Activated T-helper 2 cell treated with anti-CD3 and anti-CD28 coated beads, Interferon-gamma antibody, Interleukin-2, Interleukin-4, amounts not matched to agents 10 μg/mL and 5 μg/mL and 100 μg/mL, durations not matched to agents 14 hours and 24 hours and 36 hours (primary cell): ENCODE measurements at regions of chr19 and their contacts with region 1.

Region 1: DNA sequence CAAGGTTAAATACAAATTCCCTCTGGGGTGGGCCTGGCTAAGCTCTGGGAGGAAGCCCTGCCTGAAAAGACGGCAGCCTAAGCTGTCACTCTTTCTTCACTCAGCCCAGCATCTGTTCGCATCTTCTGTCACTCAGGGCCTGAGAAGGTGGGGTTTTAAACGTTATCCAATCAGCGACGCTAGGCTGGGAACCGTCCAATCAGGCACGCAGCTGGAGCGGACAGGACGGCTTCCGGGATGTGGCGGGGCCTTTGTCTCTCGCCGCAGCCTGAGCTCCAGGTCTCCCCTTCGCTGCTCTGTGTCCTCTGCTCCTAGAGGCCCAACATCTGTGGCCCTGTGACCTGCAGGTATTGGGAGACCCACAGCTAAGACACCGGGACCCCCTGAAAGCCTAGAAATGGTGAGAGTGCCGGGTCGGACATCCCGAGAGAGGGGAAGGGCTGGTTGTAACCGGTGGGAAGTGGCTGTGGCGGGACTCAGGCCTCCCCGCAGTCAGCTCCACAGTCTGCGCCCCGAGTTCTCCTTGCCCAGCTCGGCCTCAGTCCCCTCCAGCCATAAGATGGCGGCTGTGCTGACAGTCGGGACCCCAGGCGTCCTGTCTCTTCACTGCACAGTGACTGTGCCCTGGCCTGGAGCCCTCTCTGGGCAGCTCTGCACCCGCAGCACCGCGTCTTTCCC is at the start of gene ZNF431:
- DNase-seq: peak; percentile 88
- H3K4me3 Mint-ChIP-seq: peak within 1 kb of the TSS; percentile 98
- H3K27ac Mint-ChIP-seq: peak within 1 kb of the TSS; percentile 94
- H3K4me1 Mint-ChIP-seq: peaks cover 13% of the 10 kb centered on the region
- H3K27me3 Mint-ChIP-seq: no peaks in the 10 kb centered on the region
- total RNA-seq, gene ZNF431: 15.6 and 16.0 TPM in 2 replicates

Region 2: DNA sequence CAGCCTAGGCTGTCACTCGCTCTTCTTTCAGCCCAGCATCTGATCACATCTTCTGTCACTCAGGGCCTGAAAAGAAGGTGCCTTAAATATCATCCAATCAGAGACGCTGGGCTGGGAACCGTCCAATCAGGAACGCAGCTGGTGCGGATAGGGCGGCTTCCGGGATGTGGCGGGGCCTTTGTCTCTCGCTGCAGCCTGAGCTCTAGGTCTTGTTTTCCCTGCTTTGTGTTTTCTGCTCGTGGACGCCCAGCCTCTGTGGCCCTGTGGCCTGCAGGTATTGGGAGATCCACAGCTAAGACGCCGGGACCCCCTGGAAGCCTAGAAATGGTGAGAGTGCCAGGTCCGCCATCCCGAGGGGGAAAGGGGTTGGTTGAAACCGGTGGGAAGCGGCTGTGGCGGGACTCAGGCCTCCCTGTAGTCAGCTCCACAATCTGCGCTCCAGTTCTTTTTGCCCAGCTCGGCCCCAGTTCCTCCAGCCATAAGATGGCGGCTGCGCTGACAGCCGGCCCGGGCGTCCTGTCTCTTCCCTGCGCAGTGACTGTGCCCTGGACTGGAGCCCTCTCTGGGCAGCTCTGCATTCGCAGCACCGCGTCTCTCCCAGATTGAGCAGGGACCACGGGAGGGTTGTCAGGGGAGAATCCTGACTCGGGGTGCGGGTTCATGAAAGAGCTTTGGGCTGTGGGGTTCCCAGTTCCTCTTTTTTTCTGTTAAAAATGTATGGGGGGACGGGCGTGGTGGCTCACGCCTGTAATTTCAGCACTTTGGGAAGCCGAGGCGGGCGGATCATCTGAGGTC is 218.7 kb before region 1 on chr19 and contains the start of gene ZNF85:
- intact Hi-C with region 1: loop called (anchors 10 kb)
- DNase-seq: peak; percentile 87
- H3K4me3 Mint-ChIP-seq: peak within 1 kb of the TSS; percentile 95
- H3K27ac Mint-ChIP-seq: peak within 1 kb of the TSS; percentile 96
- H3K4me1 Mint-ChIP-seq: peaks cover 6% of the 10 kb centered on the region
- H3K27me3 Mint-ChIP-seq: no peaks in the 10 kb centered on the region
- total RNA-seq, gene ZNF85: 8.2 and 10.1 TPM in 2 replicates

Region 3: GRCh38 chr19:21082011-21082975 is 59.6 kb before region 1 on chr19 and contains the start of gene ZNF714:
- intact Hi-C with region 1: loop called (anchors 2 kb)
- DNase-seq: peak; percentile 86
- H3K4me3 Mint-ChIP-seq: peak within 1 kb of the TSS; percentile 97
- H3K27ac Mint-ChIP-seq: peak within 1 kb of the TSS; percentile 97
- H3K4me1 Mint-ChIP-seq: peaks cover 27% of the 10 kb centered on the region
- H3K27me3 Mint-ChIP-seq: no peaks in the 10 kb centered on the region
- total RNA-seq, gene ZNF714: 20.1 and 21.4 TPM in 2 replicates

Region 4: DNA sequence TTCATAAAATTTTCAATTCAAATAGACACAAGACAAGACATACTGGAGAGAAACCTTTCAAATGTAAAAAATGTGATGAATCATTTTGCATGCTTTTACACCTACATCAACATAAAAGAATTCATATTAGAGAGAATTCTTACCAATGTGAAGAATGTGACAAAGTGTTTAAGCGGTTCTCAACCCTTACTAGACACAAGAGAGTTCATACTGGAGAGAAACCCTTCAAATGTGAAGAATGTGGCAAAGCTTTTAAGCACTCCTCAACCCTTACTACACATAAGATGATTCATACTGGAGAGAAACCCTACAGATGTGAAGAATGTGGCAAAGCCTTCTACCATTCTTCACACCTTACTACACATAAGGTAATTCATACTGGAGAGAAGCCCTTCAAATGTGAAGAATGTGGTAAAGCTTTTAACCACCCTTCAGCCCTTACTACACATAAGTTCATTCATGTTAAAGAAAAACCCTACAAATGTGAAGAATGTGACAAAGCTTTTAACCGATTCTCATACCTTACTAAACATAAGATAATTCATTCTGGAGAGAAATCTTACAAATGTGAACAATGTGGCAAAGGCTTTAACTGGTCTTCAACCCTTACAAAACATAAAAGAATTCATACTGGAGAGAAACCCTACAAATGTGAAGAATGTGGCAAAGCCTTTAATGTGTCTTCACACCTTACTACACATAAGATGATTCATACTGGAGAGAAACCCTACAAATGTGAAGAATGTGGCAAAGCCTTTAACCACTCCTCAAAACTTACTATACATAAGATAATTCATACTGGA is 24.7 kb before region 1 on chr19:
- intact Hi-C with region 1: no loop called
- DNase-seq: no peak
- H3K4me3 Mint-ChIP-seq: no peak overlapping the region
- H3K27ac Mint-ChIP-seq: no peak overlapping the region
- H3K4me1 Mint-ChIP-seq: no peaks in the 10 kb centered on the region
- H3K27me3 Mint-ChIP-seq: no peaks in the 10 kb centered on the region

Region 5: GRCh38 chr19:21210037-21210621 is 68.2 kb after region 1 on chr19:
- intact Hi-C with region 1: no loop called
- DNase-seq: no peak
- H3K4me3 Mint-ChIP-seq: no peak overlapping the region
- H3K27ac Mint-ChIP-seq: no peak overlapping the region
- H3K4me1 Mint-ChIP-seq: no peaks in the 10 kb centered on the region
- H3K27me3 Mint-ChIP-seq: no peaks in the 10 kb centered on the region